IMR-90 (cell line): ENCODE measurements at regions of chr12 and their contacts with region 1.

Region 1: DNA sequence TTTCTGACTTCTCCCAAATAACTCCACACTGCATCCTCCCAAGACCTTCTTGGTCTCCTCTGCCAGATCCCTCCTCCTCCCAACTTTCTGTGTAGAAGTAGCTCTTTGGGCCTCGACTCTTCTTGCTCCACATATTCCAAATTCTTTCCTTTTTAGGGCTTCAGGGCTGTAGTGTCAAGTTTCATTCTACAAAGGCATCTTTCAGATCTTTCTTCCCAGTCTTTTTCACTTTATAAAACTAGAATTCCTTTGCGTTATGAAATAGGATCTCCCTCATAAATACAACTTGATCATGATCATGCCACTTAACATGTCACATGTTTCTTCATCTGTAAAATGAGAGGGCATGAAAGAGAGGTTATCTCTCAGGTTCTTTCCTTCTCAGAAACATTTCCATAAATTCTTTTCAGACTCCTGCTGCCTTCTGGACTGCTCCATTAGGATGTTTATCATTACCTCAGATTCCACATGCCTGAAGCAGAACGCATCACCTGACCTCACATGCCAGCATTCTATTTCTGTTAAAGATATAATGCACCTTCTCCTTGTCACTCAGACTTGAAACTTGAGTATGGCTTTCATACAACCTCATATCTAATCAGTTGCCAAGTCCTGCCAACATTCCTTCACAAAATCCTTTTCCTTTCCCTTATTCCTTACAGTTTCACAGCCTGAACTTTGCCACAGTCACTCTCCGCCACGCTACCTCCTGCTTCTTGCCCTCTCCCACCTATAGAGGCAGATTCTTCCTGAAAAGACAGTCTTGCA is 8.5 kb downstream of the SLC38A1 start:
- DNase-seq: peak; percentile 70
- ATAC-seq: peak; percentile 82
- H3K4me3 ChIP-seq: peak overlapping the region; percentile 2; the same call in 1 of the 2 replicates
- H3K27ac ChIP-seq: peak overlapping the region; percentile 98
- H3K4me1 ChIP-seq: peaks cover 26% of the 10 kb centered on the region
- H3K27me3 ChIP-seq: no peaks in the 10 kb centered on the region
- CTCF ChIP-seq: no peak
- POLR2A ChIP-seq: no peak
- RAD21 ChIP-seq: no peak

Region 2: GRCh38 chr12:46217541-46218321 is 42.6 kb before region 1 on chr12:
- CTCF ChIA-PET with region 1: no interaction called
- POLR2A ChIA-PET with region 1: no interaction called
- dilution Hi-C with region 1: no loop called
- in situ Hi-C with region 1: loop called (anchors 5 kb)
- intact Hi-C with region 1: loop called (anchors 5 kb)
- DNase-seq: no peak
- ATAC-seq: no peak
- H3K4me3 ChIP-seq: no peak overlapping the region
- H3K27ac ChIP-seq: no peak overlapping the region
- H3K4me1 ChIP-seq: peaks cover 10% of the 10 kb centered on the region
- H3K27me3 ChIP-seq: no peaks in the 10 kb centered on the region
- CTCF ChIP-seq: no peak
- POLR2A ChIP-seq: no peak
- RAD21 ChIP-seq: no peak